ENCODE measurements at regions of chr5 and their contacts with region 1.

Region 1: GRCh38 chr5:6820851-6821479 is 107.7 kb downstream of the TENT4A start:
- DNase-seq: no peak
- ATAC-seq: no peak
- H3K4me3 ChIP-seq: no peak overlapping the region
- H3K27ac ChIP-seq: no peak overlapping the region
- H3K4me1 ChIP-seq: no peaks in the 10 kb centered on the region
- H3K27me3 ChIP-seq: peaks cover 0 to 64% (median 25%) of the 10 kb centered on the region in 7 donors
- CTCF ChIP-seq: peak in 7 of 9 donors; percentile 28 to 64 (median 46)

Region 2: GRCh38 chr5:6950860-6951259 is 129.9 kb after region 1 on chr5:
- intact Hi-C with region 1: no loop called
- DNase-seq: no peak
- ATAC-seq: no peak
- H3K4me3 ChIP-seq: no peak overlapping the region
- H3K27ac ChIP-seq: no peak overlapping the region
- H3K4me1 ChIP-seq: no peaks in the 10 kb centered on the region
- H3K27me3 ChIP-seq: peaks cover 0 to 6% (median 0%) of the 10 kb centered on the region in 7 donors
- CTCF ChIP-seq: peak in 2 of 9 donors; percentile 15 to 23

Region 3: DNA sequence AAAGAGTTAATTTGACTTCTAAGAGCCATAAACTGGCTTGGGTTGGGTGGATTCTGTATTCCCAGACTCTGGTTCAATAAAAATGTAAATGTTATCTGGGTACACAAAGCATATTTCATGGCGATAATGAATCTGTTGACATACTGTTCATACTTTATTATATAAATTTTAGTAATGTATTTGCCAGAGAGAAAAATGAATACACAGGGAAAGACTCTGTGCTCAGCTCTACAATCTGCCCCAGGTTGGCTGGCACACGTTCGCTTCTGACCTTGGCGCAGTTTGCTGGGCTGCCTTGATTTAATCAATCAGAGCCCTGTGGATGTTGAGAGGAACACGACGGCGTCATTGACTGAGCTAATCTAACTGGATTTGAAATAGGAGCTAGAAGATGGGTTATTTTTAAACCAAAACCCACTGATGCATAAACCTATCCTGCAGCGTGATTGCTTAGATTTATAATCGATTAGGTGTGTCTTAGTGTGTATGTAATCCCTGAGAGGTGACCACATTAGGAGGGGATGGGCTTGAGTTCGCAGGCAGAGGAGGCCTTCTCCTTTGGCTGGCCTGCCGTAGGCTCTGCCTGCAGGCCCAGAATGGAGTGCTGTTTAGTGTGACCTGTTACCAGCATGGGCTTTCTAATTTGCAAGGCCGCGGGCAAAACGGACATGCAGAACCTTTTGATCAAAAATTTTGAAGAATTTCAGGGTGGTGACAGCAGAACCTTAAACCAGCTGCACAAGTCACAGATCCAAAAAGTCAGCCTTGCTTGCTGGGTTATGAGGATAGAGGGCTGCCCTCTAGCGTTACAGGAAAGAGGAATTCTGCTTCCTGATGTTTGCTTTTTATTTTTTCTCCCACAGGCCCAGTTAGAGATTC is 571.1 kb after region 1 on chr5:
- intact Hi-C with region 1: loop called in 2 of 10 experiments (anchors 5 to 10 kb)
- DNase-seq: no peak
- ATAC-seq: peak in 2 of 8 donors; percentile 46 to 62
- H3K4me3 ChIP-seq: no peak overlapping the region
- H3K27ac ChIP-seq: no peak overlapping the region
- H3K4me1 ChIP-seq: peaks cover 0 to 12% (median 0%) of the 10 kb centered on the region in 9 donors
- H3K27me3 ChIP-seq: peaks cover 4 to 36% (median 30%) of the 10 kb centered on the region in 7 donors
- CTCF ChIP-seq: peak in 8 of 9 donors; percentile 30 to 59 (median 50)